ENCODE measurements at regions of chr5 and their contacts with region 1.

Region 1: DNA sequence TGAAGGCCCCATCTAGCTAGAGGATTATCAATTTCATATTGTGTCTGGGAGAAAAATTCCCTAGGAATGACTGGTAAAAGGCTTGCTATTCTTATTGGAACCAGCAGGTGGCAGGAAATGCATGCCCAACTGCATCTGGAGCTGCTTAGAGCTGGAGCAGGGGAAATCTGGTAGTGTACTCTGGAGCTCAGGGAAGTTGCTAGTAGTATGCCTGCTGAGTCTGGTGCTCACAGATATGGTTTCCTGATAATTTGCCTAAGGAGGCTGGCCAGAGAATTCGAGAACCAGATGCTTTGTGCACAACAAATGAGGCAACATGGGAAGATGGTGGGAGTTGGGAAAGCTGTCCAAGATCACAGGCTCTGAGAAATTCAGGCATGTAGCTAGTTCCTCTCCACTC is 53.7 kb downstream of the G3BP1 start:
- DNase-seq: peak; percentile 31
- ATAC-seq: peak; percentile 95

Region 2: DNA sequence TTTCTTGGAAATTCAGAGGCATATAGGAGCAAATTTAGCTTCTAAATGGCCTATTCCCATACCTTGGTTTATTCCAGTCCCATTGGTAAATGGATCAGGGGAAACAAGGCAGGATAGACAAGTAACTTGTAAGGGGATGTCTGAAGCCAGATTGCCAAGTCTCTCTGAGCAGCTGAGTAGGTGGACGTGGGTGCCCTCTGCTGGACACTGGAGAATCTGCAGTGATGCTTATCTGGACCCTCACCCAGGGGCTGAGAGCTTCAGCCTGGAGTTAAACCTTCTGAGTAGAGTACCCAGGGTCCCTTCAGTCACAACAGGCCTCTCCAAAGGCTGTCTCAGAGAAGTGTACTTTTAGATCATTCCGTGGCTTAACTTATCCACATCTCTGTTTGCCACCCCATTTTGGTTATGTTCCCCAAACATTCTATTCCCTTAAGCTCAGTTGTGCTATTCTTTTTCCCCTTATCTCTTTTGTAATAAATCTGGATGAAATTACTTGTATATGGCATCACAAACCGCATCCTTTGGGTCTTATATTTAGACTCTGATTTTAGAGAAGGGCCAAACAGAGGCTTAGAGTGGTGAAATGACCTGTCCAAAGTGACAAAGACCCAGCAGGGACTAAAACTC is 317.5 kb after region 1 on chr5:
- intact Hi-C with region 1: loop called (anchors 2 kb)
- DNase-seq: peak; percentile 61
- ATAC-seq: peak; percentile 77

Region 3: DNA sequence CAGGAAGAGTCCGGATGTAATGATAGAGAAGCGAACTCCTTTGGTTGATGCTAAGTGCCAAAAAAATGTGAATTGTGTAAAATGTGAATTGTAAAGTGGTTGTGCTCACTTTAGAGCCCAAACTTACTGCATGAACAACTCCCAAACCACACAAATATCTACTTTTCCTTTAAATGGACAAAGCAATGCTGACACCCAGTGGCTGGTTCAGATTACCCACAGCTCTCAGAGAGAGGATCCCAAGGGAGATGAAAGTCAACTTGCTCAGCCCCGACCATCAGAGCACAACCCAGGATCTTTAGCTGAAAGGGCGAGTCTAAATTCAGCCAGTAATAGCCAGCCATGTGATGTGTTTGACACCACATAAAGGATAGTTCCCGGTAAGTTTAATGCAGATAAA is 446.0 kb after region 1 on chr5:
- intact Hi-C with region 1: loop called (anchors 2 kb)
- DNase-seq: no peak
- ATAC-seq: peak; percentile 76

Region 4: DNA sequence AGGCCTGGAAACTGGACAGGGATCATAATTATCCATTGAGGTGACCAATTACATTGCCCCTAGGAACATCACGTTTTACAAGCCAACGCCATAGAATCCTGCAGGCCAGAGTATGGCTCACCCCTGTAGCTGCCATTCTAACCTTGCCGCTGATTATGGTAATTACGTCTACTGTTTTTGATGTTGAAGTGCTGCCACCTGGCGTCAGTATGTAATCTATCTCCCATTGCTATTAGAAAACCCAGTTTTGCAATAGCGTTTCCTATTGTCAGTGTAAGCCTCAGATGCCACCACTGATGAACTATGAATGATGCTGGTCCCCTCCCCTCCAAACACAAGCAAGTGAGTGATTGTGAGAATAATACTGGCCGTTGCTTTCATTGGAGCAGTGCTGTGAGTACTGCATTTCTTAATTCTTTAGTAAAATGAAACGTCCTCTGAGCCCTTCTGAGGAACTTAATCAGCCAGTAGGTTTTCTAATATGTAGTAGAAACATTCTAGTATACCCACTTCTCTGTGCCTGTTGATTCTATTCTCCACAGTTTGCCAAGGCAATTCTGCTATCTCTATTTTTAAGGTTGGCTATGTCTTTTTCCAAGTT is 680.1 kb after region 1 on chr5:
- intact Hi-C with region 1: loop called (anchors 5 kb)
- DNase-seq: peak; percentile 39
- ATAC-seq: peak; percentile 88